ENCODE measurements at regions of chr3 and their contacts with region 1.

Region 1: GRCh38 chr3:99645277-99646106 is 7.1 kb downstream of the COL8A1 start:
- DNase-seq: peak; percentile 58
- ATAC-seq: no peak
- H3K4me3 ChIP-seq: no peak overlapping the region
- H3K27ac ChIP-seq: no peak overlapping the region
- H3K4me1 ChIP-seq: peaks cover 30% of the 10 kb centered on the region
- H3K27me3 ChIP-seq: no peaks in the 10 kb centered on the region
- CTCF ChIP-seq: peak; percentile 99

Region 2: GRCh38 chr3:99627062-99627826 is 18.2 kb before region 1 on chr3:
- CTCF ChIA-PET with region 1: no interaction called
- POLR2A ChIA-PET with region 1: no interaction called
- intact Hi-C with region 1: no loop called
- DNase-seq: peak; percentile 78
- ATAC-seq: peak; percentile 62
- H3K4me3 ChIP-seq: no peak overlapping the region
- H3K27ac ChIP-seq: peak overlapping the region; percentile 5; the same call in 1 of the 2 replicates
- H3K4me1 ChIP-seq: peaks cover 54% of the 10 kb centered on the region
- H3K27me3 ChIP-seq: no peaks in the 10 kb centered on the region
- CTCF ChIP-seq: peak; percentile 51

Region 3: DNA sequence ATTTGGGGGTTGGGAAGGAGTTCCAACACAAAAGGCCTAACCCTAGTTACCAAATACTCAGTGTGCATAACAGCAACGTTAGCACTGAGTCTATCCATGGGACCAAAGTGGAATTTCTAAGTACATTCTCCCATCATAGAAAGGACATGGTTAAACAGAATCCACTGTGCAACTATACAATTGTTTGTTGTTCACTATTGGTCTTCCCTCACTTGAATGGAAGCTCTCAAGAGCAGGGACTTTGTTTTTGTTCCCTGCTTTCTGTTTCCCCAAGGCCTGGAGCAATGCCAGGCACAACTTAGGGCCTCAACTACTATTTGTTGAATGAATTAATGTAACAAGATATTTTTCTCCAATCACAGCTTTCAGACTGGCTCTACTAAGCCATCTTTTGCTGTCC is 18.5 kb after region 1 on chr3:
- CTCF ChIA-PET with region 1: interaction called, 3 read pairs
- POLR2A ChIA-PET with region 1: no interaction called
- intact Hi-C with region 1: loop called (anchors 2 kb)
- DNase-seq: peak; percentile 42
- ATAC-seq: no peak
- H3K4me3 ChIP-seq: no peak overlapping the region
- H3K27ac ChIP-seq: peak overlapping the region; percentile 96
- H3K4me1 ChIP-seq: peaks cover 49% of the 10 kb centered on the region
- H3K27me3 ChIP-seq: no peaks in the 10 kb centered on the region
- CTCF ChIP-seq: no peak

Region 4: DNA sequence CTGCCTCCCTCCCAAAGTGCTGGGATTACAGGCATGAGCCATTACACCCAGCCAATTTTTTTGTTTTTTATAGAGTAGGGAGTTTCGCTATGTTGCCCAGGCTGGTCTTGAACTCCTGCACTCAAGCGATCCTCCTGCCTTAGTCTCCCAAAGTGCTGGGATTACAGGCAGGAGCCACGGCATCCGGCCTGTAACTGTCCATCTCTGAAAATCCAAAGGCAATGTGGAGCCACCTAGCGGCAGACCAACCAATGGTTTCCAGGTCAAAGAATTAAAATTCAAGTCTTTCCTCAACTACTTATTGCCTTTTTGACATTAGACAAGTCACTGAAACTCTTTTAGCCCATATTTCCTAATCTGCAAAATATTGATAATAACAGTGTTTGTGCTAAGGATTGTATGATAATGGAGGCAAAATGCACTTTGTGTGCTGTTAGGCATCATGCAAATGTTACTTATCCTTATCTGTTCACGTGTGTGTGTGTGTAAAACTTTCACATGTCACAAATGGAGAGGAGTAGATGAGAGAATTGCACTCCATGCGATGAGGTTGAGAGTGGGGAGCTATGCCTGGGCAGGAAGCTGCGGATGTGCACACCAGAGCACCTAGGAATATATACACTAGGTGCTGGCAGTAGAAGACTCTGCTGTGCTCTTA is 41.6 kb after region 1 on chr3:
- CTCF ChIA-PET with region 1: no interaction called
- POLR2A ChIA-PET with region 1: interaction called, 3 read pairs
- intact Hi-C with region 1: loop called (anchors 1 kb)
- DNase-seq: peak; percentile 82
- ATAC-seq: peak; percentile 82
- H3K4me3 ChIP-seq: no peak overlapping the region
- H3K27ac ChIP-seq: no peak overlapping the region
- H3K4me1 ChIP-seq: no peaks in the 10 kb centered on the region
- H3K27me3 ChIP-seq: no peaks in the 10 kb centered on the region
- CTCF ChIP-seq: peak; percentile 89

Region 5: GRCh38 chr3:99789011-99789721 is 143.7 kb after region 1 on chr3:
- CTCF ChIA-PET with region 1: no interaction called
- POLR2A ChIA-PET with region 1: no interaction called
- intact Hi-C with region 1: loop called (anchors 1 kb)
- DNase-seq: peak; percentile 84
- ATAC-seq: peak; percentile 100
- H3K4me3 ChIP-seq: no peak overlapping the region
- H3K27ac ChIP-seq: no peak overlapping the region
- H3K4me1 ChIP-seq: peaks cover 4% of the 10 kb centered on the region; the same call in 1 of the 2 replicates
- H3K27me3 ChIP-seq: no peaks in the 10 kb centered on the region
- CTCF ChIP-seq: peak; percentile 94

Measured in PC-3 (cell line).